BJ (cell line): ENCODE measurements at regions of chrX and their contacts with region 1.

Region 1: GRCh38 chrX:72260448-72260847 is 16.6 kb downstream of the RPS4X start:
- DNase-seq: no peak
- H3K4me3 ChIP-seq: no peak overlapping the region
- H3K27me3 ChIP-seq: no peaks in the 10 kb centered on the region
- CTCF ChIP-seq: no peak

Region 2: DNA sequence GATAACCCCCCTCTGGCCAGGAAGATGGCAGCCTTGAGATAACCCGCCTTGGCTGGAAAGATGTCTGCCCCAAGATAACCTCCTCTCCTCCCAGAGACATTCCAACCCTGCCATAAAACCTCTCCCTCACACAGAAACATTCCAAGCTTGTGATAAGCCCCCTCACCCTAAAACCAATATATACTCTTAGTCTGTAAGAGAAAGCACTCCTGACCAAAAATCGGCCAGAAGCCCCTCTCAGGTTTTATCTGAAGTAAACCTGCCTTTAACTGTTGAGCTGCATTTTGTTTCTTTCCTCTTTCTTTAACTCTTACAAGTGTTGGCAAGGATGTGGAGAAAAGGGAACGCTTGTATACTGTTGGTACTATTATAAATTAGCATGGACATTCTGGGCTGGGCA is 30.2 kb before region 1 on chrX:
- CTCF ChIA-PET with region 1: no interaction called
- POLR2A ChIA-PET with region 1: no interaction called
- DNase-seq: no peak
- H3K4me3 ChIP-seq: no peak overlapping the region
- H3K27me3 ChIP-seq: no peaks in the 10 kb centered on the region
- CTCF ChIP-seq: no peak

Region 3: DNA sequence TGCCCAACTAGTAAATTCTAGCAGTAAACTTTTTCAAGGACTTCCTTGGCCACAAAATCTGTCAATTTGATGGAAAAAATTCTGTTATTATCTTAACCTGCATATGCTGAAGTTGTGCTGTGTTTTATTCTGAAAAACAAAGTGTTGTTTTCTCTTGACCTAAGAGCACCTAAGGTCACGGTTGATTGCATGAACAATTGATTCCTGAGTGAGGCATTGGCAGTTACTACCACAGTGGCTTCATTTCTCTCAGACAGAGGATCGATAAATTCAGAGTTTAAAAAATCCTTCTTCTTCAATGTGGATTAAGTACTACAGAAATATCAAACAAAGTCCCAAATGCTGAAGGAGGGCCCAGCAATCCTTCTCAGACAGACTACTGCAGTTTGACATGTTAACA is 306.0 kb after region 1 on chrX:
- CTCF ChIA-PET with region 1: no interaction called
- POLR2A ChIA-PET with region 1: interaction called, 11 read pairs
- DNase-seq: no peak
- H3K4me3 ChIP-seq: no peak overlapping the region
- H3K27me3 ChIP-seq: no peaks in the 10 kb centered on the region
- CTCF ChIP-seq: no peak